ENCODE measurements at regions of chr10 and their contacts with region 1.

Region 1: DNA sequence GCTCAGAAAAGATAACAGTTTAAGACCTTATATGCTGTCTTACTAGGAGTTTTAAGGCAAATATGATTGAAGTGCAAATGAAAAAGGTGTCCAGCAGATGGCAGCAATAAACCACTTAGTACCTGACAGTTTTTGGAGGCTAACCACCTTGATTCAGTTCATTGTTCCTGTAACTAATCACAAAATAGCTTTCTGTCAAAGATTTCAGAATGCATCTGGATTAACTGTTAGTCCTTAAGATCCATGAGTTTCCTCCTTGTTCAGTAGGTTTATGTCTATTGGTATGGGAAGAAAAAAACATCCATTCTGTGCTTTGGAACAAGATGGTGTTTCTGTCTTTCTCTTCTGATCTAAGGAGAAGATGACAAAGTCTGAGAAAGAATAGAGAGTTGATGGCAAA is 46.6 kb downstream of the CCSER2 start:
- DNase-seq: peak in 1 of 2 donors; percentile 43
- ATAC-seq: peak in 3 of 8 donors; percentile 16 to 52 (median 37)
- H3K4me3 ChIP-seq: no peak overlapping the region
- H3K27ac ChIP-seq: no peak overlapping the region
- H3K4me1 ChIP-seq: peaks cover 0 to 7% (median 0%) of the 10 kb centered on the region in 9 donors
- H3K27me3 ChIP-seq: no peaks in the 10 kb centered on the region
- CTCF ChIP-seq: peak; percentile 52 to 80 (median 74)

Region 2: GRCh38 chr10:84264611-84265141 is 110.3 kb before region 1 on chr10:
- intact Hi-C with region 1: loop called in 8 of 10 experiments (anchors 2 to 10 kb)
- DNase-seq: peak; percentile 56 to 58
- ATAC-seq: peak; percentile 87 to 94 (median 91)
- H3K4me3 ChIP-seq: no peak overlapping the region
- H3K27ac ChIP-seq: no peak overlapping the region
- H3K4me1 ChIP-seq: peaks cover 0 to 5% (median 0%) of the 10 kb centered on the region in 9 donors
- H3K27me3 ChIP-seq: peaks cover 0 to 25% (median 7%) of the 10 kb centered on the region in 7 donors
- CTCF ChIP-seq: peak; percentile 85 to 95 (median 93)

Region 3: GRCh38 chr10:84352251-84352842 is 22.7 kb before region 1 on chr10:
- intact Hi-C with region 1: no loop called
- DNase-seq: peak; percentile 22 to 51
- ATAC-seq: peak in 7 of 8 donors; percentile 43 to 75 (median 57)
- H3K4me3 ChIP-seq: no peak overlapping the region
- H3K27ac ChIP-seq: no peak overlapping the region
- H3K4me1 ChIP-seq: peaks cover 4 to 57% (median 43%) of the 10 kb centered on the region in 9 donors
- H3K27me3 ChIP-seq: no peaks in the 10 kb centered on the region
- CTCF ChIP-seq: peak; percentile 41 to 78 (median 71)

Region 4: DNA sequence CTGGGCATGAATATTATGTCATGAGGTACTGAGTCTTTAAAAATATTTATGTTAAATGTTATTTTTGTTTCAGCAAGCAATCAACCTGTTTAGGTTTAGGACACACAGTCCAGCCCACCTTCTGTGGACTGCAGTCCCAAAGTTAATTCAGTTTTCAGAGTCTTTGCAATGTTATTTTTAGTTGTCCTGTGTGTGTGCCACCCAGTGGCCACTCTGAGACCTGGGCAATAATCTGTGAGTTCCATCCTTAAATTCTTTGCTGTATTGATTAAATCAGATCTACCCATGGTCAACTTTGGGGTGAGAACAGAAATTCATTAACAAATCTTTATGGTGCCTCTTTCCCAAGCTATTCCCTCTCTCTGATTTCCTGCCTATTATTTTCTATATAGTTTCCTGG is 368.5 kb after region 1 on chr10:
- intact Hi-C with region 1: loop called in 1 of 10 experiments (anchors 10 kb)
- DNase-seq: no peak
- ATAC-seq: no peak
- H3K4me3 ChIP-seq: no peak overlapping the region
- H3K27ac ChIP-seq: no peak overlapping the region
- H3K4me1 ChIP-seq: no peaks in the 10 kb centered on the region
- H3K27me3 ChIP-seq: no peaks in the 10 kb centered on the region
- CTCF ChIP-seq: peak in 7 of 9 donors; percentile 28 to 41 (median 36)

Measured in heart right ventricle (tissue), 16 donors.